ENCODE measurements at regions of chr20 and their contacts with region 1.

Region 1: DNA sequence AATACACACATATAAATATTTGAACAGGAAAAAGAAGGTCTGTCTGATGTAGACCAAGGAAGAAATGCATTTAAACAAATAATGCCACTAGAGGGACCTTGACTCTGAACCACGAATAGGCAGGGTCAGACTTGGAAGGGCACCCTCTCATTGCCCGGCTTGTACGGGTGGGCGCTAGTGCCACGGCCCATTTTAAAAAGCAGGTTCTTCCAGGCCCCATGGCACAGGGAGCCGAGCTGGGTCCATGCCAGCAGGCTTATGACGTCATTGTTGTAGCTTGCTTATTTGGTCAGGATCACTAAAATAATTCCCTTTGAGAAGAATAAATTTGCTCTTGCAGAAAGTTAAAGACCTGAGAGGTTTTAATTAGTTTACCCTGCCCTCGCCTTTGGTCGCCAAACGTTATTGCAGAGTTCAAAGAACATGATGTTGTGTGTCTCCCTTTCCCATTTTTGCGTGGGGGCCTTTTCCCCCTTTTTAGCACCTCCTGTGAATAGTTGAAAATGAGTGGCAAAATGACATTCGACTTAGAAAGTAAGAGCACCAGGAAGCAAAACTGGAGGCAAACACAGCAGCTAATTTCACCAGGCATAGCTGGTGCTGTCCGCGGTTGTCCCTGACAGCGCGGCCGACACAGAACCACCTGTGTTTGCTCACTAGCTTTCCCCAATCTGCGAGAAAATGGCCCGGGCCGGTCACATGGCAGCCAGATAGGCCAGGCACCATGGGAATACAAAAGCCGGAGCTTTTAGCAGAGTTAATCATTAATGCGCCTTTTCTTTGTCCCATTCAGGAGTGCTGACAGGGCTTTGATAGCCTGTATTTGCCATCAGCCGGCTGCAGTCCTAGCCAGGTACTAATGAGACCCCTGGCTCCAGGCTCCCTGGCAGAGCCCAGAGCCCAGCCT is 93.8 kb downstream of the FOXA2 start:
- DNase-seq: peak; percentile 61
- ATAC-seq: peak; percentile 89
- H3K4me3 ChIP-seq: no peak overlapping the region
- H3K27ac ChIP-seq: no peak overlapping the region
- H3K4me1 ChIP-seq: peaks cover 10% of the 10 kb centered on the region; the same call in 1 of the 2 replicates
- H3K27me3 ChIP-seq: no peaks in the 10 kb centered on the region
- CTCF ChIP-seq: peak; percentile 71

Region 2: DNA sequence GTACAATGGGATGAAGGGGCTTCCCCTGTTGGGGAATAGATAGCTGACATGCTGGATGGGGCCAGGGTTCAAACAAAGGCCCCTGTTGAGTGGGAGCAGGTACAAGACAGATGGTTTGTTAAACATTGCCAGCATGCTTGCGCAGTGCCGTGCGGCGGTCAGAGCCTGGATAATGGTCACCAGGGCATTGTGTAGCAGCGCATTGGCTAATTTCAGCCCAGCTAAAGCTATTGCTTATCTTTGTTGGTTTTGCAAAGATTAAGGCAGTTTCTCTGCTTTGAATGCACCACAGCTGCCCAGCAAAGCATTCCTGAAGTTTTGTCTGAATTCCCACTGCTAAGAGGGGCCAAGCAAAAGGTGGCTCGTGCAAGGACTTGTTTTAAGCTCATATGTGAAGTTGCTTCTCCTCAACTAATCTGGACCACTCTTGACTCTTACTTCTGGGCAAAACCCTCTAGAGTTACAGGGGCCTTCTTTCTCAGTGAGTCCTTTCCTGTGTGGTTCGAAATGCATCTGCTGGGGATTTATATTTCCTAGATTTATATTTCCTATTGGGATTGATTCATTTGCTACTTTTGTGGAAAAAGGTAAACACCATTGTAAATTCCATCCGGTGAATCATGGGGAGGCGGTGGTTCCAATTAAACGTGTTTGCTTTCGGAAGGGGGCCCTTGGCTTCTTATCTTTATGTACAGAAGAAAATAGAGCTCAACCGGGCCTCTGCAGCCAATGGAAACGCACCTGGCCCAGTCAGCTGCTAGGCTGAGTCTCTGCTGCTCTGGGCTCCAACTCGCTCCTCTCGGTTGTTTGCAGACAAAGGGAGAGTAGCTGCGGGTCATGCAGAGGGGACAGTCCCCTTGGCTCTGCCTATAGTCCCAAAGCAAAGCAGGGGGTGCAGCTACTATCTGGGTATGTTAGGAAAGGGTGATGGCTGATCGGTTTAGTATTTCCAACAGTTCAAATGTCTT is 21.7 kb after region 1 on chr20:
- CTCF ChIA-PET with region 1: no interaction called
- POLR2A ChIA-PET with region 1: no interaction called
- intact Hi-C with region 1: loop called (anchors 1 kb)
- DNase-seq: peak; percentile 99
- ATAC-seq: peak; percentile 97
- H3K4me3 ChIP-seq: no peak overlapping the region; the same call in 1 of the 2 replicates
- H3K27ac ChIP-seq: peak overlapping the region; percentile 88
- H3K4me1 ChIP-seq: peaks cover 29% of the 10 kb centered on the region
- H3K27me3 ChIP-seq: no peaks in the 10 kb centered on the region
- CTCF ChIP-seq: no peak